Mammary epithelial cell (primary cell): ENCODE measurements at regions of chr10 and their contacts with region 1.

Region 1: GRCh38 chr10:62992145-62992721 is 140.9 kb upstream of the NRBF2 start:
- DNase-seq: peak; percentile 92
- H3K4me3 ChIP-seq: no peak overlapping the region
- H3K27ac ChIP-seq: peak overlapping the region; percentile 66
- H3K4me1 ChIP-seq: peaks cover 44% of the 10 kb centered on the region
- H3K27me3 ChIP-seq: no peaks in the 10 kb centered on the region
- CTCF ChIP-seq: no peak

Region 2: GRCh38 chr10:62924344-62924748 is 67.9 kb before region 1 on chr10:
- CTCF ChIA-PET with region 1: no interaction called
- dilution Hi-C with region 1: no loop called
- in situ Hi-C with region 1: no loop called
- intact Hi-C with region 1: loop called (anchors 2 kb)
- DNase-seq: peak; percentile 72
- H3K4me3 ChIP-seq: peak overlapping the region in 2 of 3 experiments; percentile 11
- H3K27ac ChIP-seq: no peak overlapping the region
- H3K4me1 ChIP-seq: peaks cover 7% of the 10 kb centered on the region
- H3K27me3 ChIP-seq: no peaks in the 10 kb centered on the region
- CTCF ChIP-seq: no peak